ENCODE measurements at regions of chr2 and their contacts with region 1.

Region 1: GRCh38 chr2:161586517-161587167 is 37.6 kb upstream of the SLC4A10 start:
- DNase-seq: no peak
- H3K4me3 Mint-ChIP-seq: no peak overlapping the region
- H3K27ac Mint-ChIP-seq: no peak overlapping the region
- H3K4me1 Mint-ChIP-seq: no peaks in the 10 kb centered on the region
- H3K27me3 Mint-ChIP-seq: no peaks in the 10 kb centered on the region

Region 2: GRCh38 chr2:161576421-161576820 is 10.2 kb before region 1 on chr2:
- CTCF ChIA-PET with region 1: no interaction called
- POLR2A ChIA-PET with region 1: no interaction called
- DNase-seq: no peak
- H3K4me3 Mint-ChIP-seq: no peak overlapping the region
- H3K27ac Mint-ChIP-seq: no peak overlapping the region
- H3K4me1 Mint-ChIP-seq: peaks cover 4% of the 10 kb centered on the region
- H3K27me3 Mint-ChIP-seq: no peaks in the 10 kb centered on the region

Region 3: DNA sequence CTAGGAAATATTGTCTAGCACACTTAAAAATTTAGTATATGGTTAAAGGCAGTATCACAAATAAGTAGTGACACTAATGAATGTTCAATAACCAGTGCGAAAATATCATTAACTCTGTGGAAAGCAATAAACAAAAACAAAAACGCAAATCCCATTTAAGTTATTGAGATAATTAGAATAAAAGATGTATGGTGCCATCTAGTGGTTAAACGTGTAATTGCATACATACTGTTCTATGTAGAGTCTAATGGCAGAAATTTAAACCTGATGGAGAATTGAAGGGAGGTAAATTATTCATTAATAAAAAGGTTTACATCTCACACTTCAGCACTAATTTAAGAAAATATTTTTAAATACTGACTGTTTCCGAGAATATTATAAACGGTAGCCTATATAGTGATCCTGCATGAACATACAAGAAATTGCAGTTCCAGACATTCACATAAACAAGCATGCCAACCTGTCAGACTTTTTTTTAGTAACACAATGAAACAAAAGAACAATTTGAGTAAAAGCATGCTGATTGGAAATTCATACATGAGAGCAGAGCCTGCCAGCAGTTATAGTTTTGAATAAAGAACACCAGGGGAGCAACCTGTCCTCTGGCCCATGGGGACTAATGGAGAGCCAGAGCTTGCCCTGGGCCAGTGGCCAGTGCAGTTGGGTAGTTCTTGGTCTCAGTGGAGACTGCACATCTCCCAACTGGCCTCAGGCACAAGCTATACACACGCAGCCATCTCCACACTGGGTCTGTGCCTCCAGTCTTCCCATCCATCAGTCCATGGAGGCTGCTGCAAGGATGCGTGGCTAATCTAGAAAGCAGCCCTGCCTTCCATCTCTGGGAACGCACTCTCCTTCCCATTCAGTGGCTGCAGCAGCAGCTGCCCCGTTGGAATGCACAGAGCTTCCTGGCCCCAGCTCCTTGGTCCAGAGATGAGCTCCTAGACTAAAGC is 537.4 kb after region 1 on chr2:
- CTCF ChIA-PET with region 1: interaction called, 41 read pairs
- POLR2A ChIA-PET with region 1: no interaction called
- DNase-seq: no peak
- H3K4me3 Mint-ChIP-seq: no peak overlapping the region
- H3K27ac Mint-ChIP-seq: no peak overlapping the region
- H3K4me1 Mint-ChIP-seq: peaks cover 28% of the 10 kb centered on the region
- H3K27me3 Mint-ChIP-seq: no peaks in the 10 kb centered on the region